Activated CD4-positive, alpha-beta memory T cell treated with anti-CD3 and anti-CD28 coated beads, Interleukin-2, amount 10 ng/mL, durations not matched to agents 7 days and 5 days (primary cell): ENCODE measurements at regions of chr10 and their contacts with region 1.

Region 1: DNA sequence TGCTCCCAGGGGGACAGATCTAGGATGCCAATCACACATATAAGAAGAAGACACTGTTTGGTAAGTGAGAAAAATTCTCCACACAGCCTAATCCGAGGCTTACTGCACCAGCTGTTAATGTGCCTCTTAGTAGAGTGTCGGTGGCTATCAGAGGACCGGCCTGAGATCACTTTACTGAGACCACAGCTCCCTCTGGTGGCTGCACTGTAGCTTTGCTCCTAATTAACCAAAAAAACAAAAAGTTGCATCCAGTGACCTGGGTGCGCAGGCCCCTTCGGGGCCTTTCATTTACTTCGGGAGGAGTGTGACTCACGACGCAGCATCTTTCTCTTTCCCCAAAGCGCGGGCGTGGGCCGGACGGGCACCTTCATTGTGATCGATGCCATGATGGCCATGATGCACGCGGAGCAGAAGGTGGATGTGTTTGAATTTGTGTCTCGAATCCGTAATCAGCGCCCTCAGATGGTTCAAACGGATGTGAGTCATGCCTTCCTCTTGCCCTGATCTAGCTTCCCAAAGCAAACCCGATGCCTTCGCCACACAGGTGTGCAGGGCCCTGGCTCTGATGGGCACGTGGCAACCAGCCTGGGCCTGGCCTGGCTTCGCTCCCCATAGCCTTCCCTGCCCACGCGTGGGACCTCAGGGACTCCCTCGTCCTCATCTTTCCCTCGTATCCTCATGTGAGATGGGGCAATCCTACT is 56.7 kb downstream of the MKI67 start:
- DNase-seq: peak; percentile 82
- H3K4me3 Mint-ChIP-seq: no peak overlapping the region
- H3K27ac Mint-ChIP-seq: peak overlapping the region; percentile 17
- H3K4me1 Mint-ChIP-seq: peaks cover 61% of the 10 kb centered on the region
- H3K27me3 Mint-ChIP-seq: no peaks in the 10 kb centered on the region

Region 2: DNA sequence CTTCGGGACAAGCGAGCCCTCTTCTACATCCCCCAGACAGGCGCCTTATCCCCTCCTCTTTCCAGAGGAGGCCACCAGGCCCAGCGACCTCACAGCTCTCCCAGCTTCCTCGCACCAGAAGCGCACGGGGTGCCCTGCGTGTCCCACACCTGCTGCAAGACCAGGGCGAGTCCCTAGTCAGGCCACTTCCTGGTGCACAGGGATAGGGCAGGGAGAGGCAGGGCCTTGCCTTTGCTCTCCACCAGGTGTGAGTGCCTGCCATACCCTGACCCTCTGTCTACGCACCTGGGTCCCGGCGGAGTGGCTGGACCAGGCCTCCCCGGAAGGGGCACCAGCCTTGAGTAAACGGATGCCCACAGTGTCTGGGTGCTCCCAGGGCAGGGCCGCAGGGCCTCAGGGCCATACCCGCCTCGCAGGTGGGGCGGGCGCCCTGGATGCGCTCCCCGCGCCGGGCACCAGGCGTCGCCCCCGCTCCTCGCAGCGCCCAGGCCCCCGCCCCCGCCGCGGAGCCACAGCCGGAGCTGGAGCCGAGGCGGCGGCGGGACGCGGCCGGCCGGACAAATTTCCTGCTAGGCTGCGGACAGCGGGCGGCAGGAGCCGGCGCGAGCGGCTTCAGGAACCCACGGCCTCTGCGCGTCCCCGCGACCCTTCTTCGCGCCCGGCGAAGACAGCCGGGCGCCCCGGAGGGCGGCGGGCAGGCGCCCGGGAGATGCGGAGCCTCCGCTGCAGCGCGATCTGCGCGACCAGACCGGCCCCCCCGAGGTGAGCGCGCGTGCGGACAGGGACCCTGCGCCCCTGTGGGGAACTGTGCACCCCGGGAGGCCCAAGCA is 162.7 kb before region 1 on chr10 and contains the start of gene PTPRE:
- CTCF ChIA-PET with region 1: interaction called, 22 read pairs
- POLR2A ChIA-PET with region 1: interaction called, 4 read pairs
- DNase-seq: peak; percentile 71
- H3K4me3 Mint-ChIP-seq: peak within 1 kb of the TSS; percentile 14
- H3K27ac Mint-ChIP-seq: no peak within 1 kb of the TSS
- H3K4me1 Mint-ChIP-seq: peaks cover 9% of the 10 kb centered on the region
- H3K27me3 Mint-ChIP-seq: peaks cover 41% of the 10 kb centered on the region
- total RNA-seq, gene PTPRE: 29.2 to 30.6 TPM

Region 3: GRCh38 chr10:127996586-127996985 is 72.9 kb before region 1 on chr10:
- CTCF ChIA-PET with region 1: no interaction called
- POLR2A ChIA-PET with region 1: no interaction called
- DNase-seq: no peak
- H3K4me3 Mint-ChIP-seq: no peak overlapping the region
- H3K27ac Mint-ChIP-seq: no peak overlapping the region
- H3K4me1 Mint-ChIP-seq: peaks cover 20% of the 10 kb centered on the region
- H3K27me3 Mint-ChIP-seq: peaks cover 36% of the 10 kb centered on the region

Region 4: DNA sequence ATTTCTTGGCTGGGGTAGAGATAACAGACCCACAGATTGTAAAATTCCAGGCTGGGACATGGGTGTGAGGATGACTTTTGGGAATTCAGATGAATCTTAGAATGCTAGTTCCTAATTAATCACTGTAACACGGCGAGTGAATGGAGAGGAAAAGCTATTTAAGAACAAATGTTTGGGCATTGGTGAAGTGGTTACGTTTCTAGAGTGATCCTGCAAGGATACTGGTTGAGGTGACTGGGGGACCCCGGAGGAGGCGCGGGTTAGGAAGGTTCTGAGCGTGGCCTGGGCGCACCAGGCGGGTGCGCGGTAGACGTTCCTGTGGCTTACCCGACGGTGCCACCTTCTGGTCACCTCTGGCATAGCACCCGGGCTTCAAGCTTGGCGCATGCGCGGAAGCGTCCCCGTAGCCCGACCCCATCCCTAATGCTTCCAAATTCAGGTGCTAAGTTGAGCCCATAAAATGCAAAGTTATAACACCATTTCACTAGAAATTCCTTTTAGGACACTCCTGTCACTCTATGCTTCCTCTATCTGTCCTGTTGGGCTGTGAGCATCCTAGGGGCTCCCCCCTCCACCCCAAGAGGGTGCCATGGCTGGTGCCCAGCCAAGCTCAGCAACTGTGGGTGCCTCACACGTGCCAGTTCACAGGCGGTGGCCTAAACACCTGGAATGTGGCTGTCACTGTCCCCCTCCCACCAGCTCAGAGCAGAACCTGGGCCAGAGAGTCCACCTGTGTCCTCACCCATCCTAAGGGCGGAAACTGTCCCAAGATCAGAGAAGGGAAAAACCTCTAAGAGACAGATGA is 58.1 kb before region 1 on chr10:
- CTCF ChIA-PET with region 1: interaction called, 23 read pairs
- POLR2A ChIA-PET with region 1: no interaction called
- DNase-seq: peak; percentile 87
- H3K4me3 Mint-ChIP-seq: no peak overlapping the region
- H3K27ac Mint-ChIP-seq: no peak overlapping the region
- H3K4me1 Mint-ChIP-seq: peaks cover 12% of the 10 kb centered on the region
- H3K27me3 Mint-ChIP-seq: peaks cover 28% of the 10 kb centered on the region

Region 5: GRCh38 chr10:128016423-128017060 is 53.0 kb before region 1 on chr10:
- CTCF ChIA-PET with region 1: interaction called, 23 read pairs
- POLR2A ChIA-PET with region 1: interaction called, 3 read pairs
- DNase-seq: no peak
- H3K4me3 Mint-ChIP-seq: no peak overlapping the region
- H3K27ac Mint-ChIP-seq: no peak overlapping the region
- H3K4me1 Mint-ChIP-seq: peaks cover 16% of the 10 kb centered on the region
- H3K27me3 Mint-ChIP-seq: peaks cover 6% of the 10 kb centered on the region

Region 6: GRCh38 chr10:128026614-128027300 is 42.7 kb before region 1 on chr10:
- CTCF ChIA-PET with region 1: interaction called, 216 read pairs
- POLR2A ChIA-PET with region 1: interaction called, 3 read pairs
- DNase-seq: peak; percentile 35
- H3K4me3 Mint-ChIP-seq: no peak overlapping the region
- H3K27ac Mint-ChIP-seq: no peak overlapping the region
- H3K4me1 Mint-ChIP-seq: peaks cover 19% of the 10 kb centered on the region
- H3K27me3 Mint-ChIP-seq: no peaks in the 10 kb centered on the region

Region 7: DNA sequence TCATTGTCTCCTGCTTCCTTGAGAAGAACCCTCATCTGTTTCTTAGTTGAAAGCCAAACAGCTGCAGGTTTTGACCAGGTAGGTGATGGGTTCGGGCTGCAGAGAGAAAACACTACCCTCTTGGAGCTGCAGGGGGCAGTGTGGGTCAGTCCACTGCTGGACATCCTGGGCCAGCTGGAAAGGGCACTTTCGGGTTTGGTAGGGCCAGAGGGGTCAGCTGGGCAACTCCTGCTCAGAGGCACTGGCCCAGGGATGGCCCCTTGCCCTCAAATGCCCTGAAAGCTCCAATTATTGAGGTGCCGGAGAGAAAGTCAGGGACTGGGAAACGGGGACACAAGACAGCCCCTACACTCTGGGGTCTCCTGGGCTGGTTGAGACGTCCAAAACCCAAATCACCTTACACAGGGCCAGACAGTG is 33.9 kb before region 1 on chr10:
- CTCF ChIA-PET with region 1: interaction called, 216 read pairs
- POLR2A ChIA-PET with region 1: interaction called, 13 read pairs
- DNase-seq: peak; percentile 71
- H3K4me3 Mint-ChIP-seq: no peak overlapping the region
- H3K27ac Mint-ChIP-seq: no peak overlapping the region
- H3K4me1 Mint-ChIP-seq: peaks cover 3% of the 10 kb centered on the region
- H3K27me3 Mint-ChIP-seq: peaks cover 2% of the 10 kb centered on the region